ENCODE measurements at regions of chrX and their contacts with region 1.

Region 1: GRCh38 chrX:133670383-133670782 is 255.1 kb upstream of the GPC4 start:
- DNase-seq: peak in 2 of 9 experiments; percentile 4 to 21
- ATAC-seq: no peak
- H3K4me3 ChIP-seq: no peak overlapping the region
- H3K4me3 Mint-ChIP-seq: no peak overlapping the region
- H3K27ac ChIP-seq: no peak overlapping the region
- H3K27ac Mint-ChIP-seq: no peak overlapping the region
- H3K4me1 ChIP-seq: no peaks in the 10 kb centered on the region
- H3K4me1 Mint-ChIP-seq: no peaks in the 10 kb centered on the region
- H3K27me3 ChIP-seq: no peaks in the 10 kb centered on the region
- H3K27me3 Mint-ChIP-seq: no peaks in the 10 kb centered on the region
- CTCF ChIP-seq: no peak

Region 2: DNA sequence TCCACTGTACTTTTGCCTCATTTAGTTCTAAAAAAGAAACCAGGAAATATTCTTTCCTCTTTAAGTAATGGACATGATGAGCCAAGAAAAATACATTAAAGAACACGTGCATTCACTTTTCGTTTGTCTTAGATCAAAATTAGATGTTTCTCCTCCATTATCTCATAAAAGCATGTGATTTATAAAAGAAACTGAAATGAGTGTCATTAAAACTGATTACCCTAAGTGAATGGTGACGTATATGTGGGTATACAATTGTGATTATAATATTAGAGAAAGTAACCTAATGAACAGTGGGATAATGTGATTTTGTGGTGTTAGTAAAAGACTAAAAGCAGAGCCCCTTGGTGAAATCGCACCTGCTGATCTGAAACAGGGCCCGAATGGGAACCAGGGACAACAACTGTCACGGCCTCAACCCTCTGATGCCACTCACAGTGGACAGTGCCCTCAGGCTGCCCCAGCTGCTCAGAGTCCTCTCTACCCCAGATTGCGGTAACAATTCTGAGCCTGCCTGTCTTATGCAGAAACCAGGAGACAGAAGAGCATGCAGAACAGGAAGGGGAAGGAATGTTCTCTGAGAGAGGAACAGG is 686.2 kb before region 1 on chrX:
- CTCF ChIA-PET with region 1: no interaction called
- POLR2A ChIA-PET with region 1: no interaction called
- intact Hi-C with region 1: loop called in 1 of 2 experiments (anchors 5 kb)
- DNase-seq: no peak
- ATAC-seq: no peak
- H3K4me3 ChIP-seq: no peak overlapping the region
- H3K4me3 Mint-ChIP-seq: no peak overlapping the region
- H3K27ac ChIP-seq: no peak overlapping the region
- H3K27ac Mint-ChIP-seq: no peak overlapping the region
- H3K4me1 ChIP-seq: no peaks in the 10 kb centered on the region
- H3K4me1 Mint-ChIP-seq: no peaks in the 10 kb centered on the region
- H3K27me3 ChIP-seq: no peaks in the 10 kb centered on the region
- H3K27me3 Mint-ChIP-seq: peaks cover 8% of the 10 kb centered on the region
- CTCF ChIP-seq: no peak

Region 3: DNA sequence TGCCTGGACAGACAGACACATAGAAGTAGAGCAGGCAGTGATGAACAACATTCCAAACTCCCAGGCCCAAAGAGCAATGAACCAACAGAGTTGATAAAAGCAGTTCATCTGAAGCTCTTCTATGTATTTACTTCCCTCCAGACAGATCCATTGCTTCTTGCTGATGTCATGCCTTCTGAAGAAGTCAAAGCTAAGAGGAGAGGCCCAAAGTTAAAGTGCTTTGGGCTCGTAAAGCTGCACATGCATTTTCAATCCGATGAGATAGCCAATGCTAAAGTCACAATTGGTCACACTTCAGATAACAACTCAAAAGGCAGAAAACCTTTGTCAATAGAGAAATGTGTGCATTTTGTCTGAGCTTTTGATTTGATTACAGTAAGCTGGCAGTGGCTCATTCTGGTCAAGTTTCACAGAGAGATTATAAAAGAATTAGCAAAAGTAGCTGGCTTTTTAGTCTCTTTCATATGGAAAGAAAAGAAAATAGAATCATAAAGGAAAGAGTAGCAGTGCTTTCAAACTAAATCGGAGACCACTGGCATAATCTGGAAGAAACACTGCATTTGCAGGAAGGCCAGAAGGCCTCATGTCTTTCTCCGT is 337.1 kb before region 1 on chrX:
- CTCF ChIA-PET with region 1: no interaction called
- POLR2A ChIA-PET with region 1: no interaction called
- intact Hi-C with region 1: loop called in 1 of 2 experiments (anchors 5 kb)
- DNase-seq: no peak
- ATAC-seq: no peak
- H3K4me3 ChIP-seq: no peak overlapping the region
- H3K4me3 Mint-ChIP-seq: no peak overlapping the region
- H3K27ac ChIP-seq: no peak overlapping the region
- H3K27ac Mint-ChIP-seq: no peak overlapping the region
- H3K4me1 ChIP-seq: no peaks in the 10 kb centered on the region
- H3K4me1 Mint-ChIP-seq: no peaks in the 10 kb centered on the region
- H3K27me3 ChIP-seq: no peaks in the 10 kb centered on the region
- H3K27me3 Mint-ChIP-seq: no peaks in the 10 kb centered on the region
- CTCF ChIP-seq: no peak

Measured in CD8-positive, alpha-beta T cell (primary cell).